Activated CD8-positive, alpha-beta T cell treated with anti-CD3 and anti-CD28 coated beads for 36 hours (primary cell): ENCODE measurements at regions of chr1 and their contacts with region 1.

Region 1: GRCh38 chr1:101309334-101310311 is 72.8 kb downstream of the S1PR1 start:
- DNase-seq: peak; percentile 72
- ATAC-seq: peak; percentile 66
- H3K4me3 Mint-ChIP-seq: peak overlapping the region; percentile 71
- H3K27ac Mint-ChIP-seq: peak overlapping the region; percentile 86
- H3K4me1 Mint-ChIP-seq: peaks cover 69% of the 10 kb centered on the region
- H3K27me3 Mint-ChIP-seq: no peaks in the 10 kb centered on the region
- CTCF ChIP-seq: peak; percentile 89

Region 2: GRCh38 chr1:100921109-100921706 is 388.4 kb before region 1 on chr1:
- CTCF ChIA-PET with region 1: interaction called, 5 read pairs
- POLR2A ChIA-PET with region 1: no interaction called
- intact Hi-C with region 1: loop called (anchors 5 kb)
- DNase-seq: no peak
- ATAC-seq: no peak
- H3K4me3 Mint-ChIP-seq: no peak overlapping the region
- H3K27ac Mint-ChIP-seq: peak overlapping the region; percentile 64
- H3K4me1 Mint-ChIP-seq: peaks cover 53% of the 10 kb centered on the region
- H3K27me3 Mint-ChIP-seq: no peaks in the 10 kb centered on the region
- CTCF ChIP-seq: peak; percentile 93

Region 3: DNA sequence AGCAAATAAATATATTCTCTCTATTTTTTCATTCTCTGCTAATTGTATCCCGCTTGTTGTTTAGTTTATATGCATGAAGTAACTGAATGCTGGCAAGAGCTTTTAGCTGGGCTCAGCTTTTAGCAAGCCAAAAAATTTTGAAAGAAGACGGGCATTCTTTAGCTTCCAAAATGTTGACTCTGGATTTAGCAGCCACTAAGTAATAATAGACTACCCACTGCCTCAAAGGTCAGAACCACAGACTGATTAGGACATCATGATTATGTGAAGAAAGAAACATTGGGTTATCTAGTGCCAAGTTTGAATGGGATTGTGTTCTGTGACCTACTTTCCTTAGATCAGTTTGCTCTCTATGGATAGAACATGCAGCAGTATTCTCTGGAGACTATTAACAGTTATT is 203.7 kb before region 1 on chr1:
- CTCF ChIA-PET with region 1: no interaction called
- POLR2A ChIA-PET with region 1: no interaction called
- intact Hi-C with region 1: no loop called
- DNase-seq: no peak
- ATAC-seq: no peak
- H3K4me3 Mint-ChIP-seq: no peak overlapping the region
- H3K27ac Mint-ChIP-seq: no peak overlapping the region
- H3K4me1 Mint-ChIP-seq: peaks cover 38% of the 10 kb centered on the region
- H3K27me3 Mint-ChIP-seq: no peaks in the 10 kb centered on the region
- CTCF ChIP-seq: no peak

Region 4: GRCh38 chr1:101288491-101288944 is 21.1 kb before region 1 on chr1:
- CTCF ChIA-PET with region 1: interaction called, 112 read pairs
- POLR2A ChIA-PET with region 1: interaction called, 5 read pairs
- intact Hi-C with region 1: no loop called
- DNase-seq: peak; percentile 79
- ATAC-seq: peak; percentile 25
- H3K4me3 Mint-ChIP-seq: no peak overlapping the region
- H3K27ac Mint-ChIP-seq: peak overlapping the region; percentile 43
- H3K4me1 Mint-ChIP-seq: peaks cover 83% of the 10 kb centered on the region
- H3K27me3 Mint-ChIP-seq: no peaks in the 10 kb centered on the region
- CTCF ChIP-seq: peak; percentile 88

Region 5: GRCh38 chr1:101338714-101339430 is 29.2 kb after region 1 on chr1:
- CTCF ChIA-PET with region 1: interaction called, 15 read pairs
- POLR2A ChIA-PET with region 1: no interaction called
- intact Hi-C with region 1: no loop called
- DNase-seq: peak; percentile 54
- ATAC-seq: peak; percentile 96
- H3K4me3 Mint-ChIP-seq: no peak overlapping the region
- H3K27ac Mint-ChIP-seq: no peak overlapping the region
- H3K4me1 Mint-ChIP-seq: peaks cover 18% of the 10 kb centered on the region
- H3K27me3 Mint-ChIP-seq: no peaks in the 10 kb centered on the region
- CTCF ChIP-seq: no peak

Region 6: GRCh38 chr1:101371259-101371658 is 61.6 kb after region 1 on chr1:
- CTCF ChIA-PET with region 1: interaction called, 55 read pairs
- POLR2A ChIA-PET with region 1: no interaction called
- intact Hi-C with region 1: no loop called
- DNase-seq: peak; percentile 42
- ATAC-seq: peak; percentile 96
- H3K4me3 Mint-ChIP-seq: no peak overlapping the region
- H3K27ac Mint-ChIP-seq: no peak overlapping the region
- H3K4me1 Mint-ChIP-seq: peaks cover 10% of the 10 kb centered on the region
- H3K27me3 Mint-ChIP-seq: no peaks in the 10 kb centered on the region
- CTCF ChIP-seq: no peak

Region 7: GRCh38 chr1:101474039-101474665 is 164.5 kb after region 1 on chr1:
- CTCF ChIA-PET with region 1: interaction called, 18 read pairs
- POLR2A ChIA-PET with region 1: no interaction called
- intact Hi-C with region 1: no loop called
- DNase-seq: no peak
- ATAC-seq: no peak
- H3K4me3 Mint-ChIP-seq: no peak overlapping the region
- H3K27ac Mint-ChIP-seq: no peak overlapping the region
- H3K4me1 Mint-ChIP-seq: peaks cover 7% of the 10 kb centered on the region
- H3K27me3 Mint-ChIP-seq: no peaks in the 10 kb centered on the region
- CTCF ChIP-seq: peak; percentile 63